ENCODE measurements at regions of chr22 and their contacts with region 1.

Region 1: DNA sequence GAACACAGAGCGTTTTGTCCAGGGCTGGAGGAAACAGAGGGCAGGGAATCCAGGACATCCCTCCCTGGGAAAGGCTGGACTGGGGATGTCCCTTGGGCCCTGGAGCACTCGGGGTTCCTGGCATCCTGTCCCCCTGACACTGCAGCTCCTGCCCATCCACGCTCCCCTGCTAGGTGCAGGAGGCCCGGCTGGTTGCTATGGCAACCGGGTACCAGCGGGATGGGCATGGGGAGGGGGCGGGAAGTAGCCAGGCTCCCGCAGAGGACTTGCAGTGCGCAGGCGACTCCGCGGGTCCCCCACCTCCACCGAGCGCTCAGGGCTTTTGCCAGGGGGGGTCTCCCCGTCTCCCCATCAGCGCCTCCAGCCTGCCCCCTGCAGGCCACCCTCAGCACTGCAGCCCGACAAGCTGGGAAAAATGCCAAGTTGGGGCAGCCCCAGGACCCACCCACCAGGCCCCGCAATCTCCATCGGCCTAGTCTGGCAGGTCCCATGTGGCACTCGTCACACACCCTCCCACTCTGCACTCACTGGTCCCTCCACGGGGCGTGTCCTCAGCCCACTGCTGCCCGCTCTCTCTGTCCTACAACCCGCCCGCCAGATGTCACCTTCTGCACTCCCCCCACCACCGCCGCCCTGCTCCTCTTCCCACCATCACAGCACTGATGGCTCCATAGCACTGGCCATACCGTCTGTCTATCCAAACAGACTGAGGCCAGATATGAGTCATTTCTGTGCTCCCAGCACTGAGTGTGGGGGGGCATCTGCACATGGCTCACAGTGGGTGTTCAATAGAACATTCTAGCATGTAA is 31.5 kb downstream of the KIAA0930 start:
- DNase-seq: peak; percentile 93
- H3K4me3 ChIP-seq: peak overlapping the region in 1 of 2 experiments; percentile 47; a peak in 1 of 4 replicates
- H3K27ac ChIP-seq: peak overlapping the region; percentile 43 to 68; a peak in 3 of 4 replicates
- H3K4me1 ChIP-seq: peaks cover 31 to 47% of the 10 kb centered on the region in 2 experiments
- H3K27me3 ChIP-seq: no peaks in the 10 kb centered on the region
- CTCF ChIP-seq: peak; percentile 84
- EP300 ChIP-seq: no peak
- RAD21 ChIP-seq: peak; percentile 25

Region 2: DNA sequence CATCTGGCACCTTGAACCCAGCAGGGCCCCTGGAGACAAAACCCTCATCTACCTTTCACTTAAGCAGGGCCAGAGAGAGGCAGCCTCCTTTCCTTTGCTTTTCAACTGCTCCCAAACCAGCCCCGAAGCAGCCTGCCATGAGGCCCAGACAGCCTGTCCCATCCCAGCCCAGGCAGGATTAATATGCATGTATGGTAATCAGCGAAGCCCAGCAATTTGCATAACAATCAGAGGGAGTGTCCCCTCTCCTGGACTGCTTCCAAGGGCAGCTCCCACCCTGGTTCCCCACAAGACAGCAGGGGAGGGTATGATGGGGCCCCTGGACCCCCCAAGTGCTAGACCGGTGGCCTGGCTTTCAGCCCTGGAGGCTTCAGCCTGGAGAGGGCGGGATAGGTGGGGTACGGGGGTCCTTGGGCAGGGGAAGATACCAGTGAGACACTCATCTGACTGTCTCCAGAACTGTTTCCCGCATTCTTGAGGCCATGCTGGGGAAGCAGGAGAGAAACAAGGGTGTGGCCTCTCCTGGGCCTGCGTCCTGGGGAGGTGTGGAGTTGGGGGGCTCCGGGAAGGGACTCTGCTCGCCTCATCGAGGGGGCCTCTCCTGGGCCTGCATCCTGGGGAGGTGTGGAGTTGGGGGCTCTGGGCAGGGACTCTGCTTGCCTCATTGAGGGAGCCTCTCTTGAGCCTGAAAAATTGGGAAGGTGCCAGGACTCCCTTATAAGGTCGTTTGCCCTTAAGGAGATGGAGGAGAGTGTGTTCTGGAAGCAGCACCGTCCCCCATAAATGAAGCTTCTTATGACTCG is 600.4 kb before region 1 on chr22:
- CTCF ChIA-PET with region 1: no interaction called
- POLR2A ChIA-PET with region 1: no interaction called
- DNase-seq: peak; percentile 15
- H3K4me3 ChIP-seq: no peak overlapping the region
- H3K27ac ChIP-seq: no peak overlapping the region
- H3K4me1 ChIP-seq: no peaks in the 10 kb centered on the region; a peak in 1 of 4 replicates
- H3K27me3 ChIP-seq: no peaks in the 10 kb centered on the region; the same call in 1 of the 2 replicates
- CTCF ChIP-seq: no peak
- EP300 ChIP-seq: no peak
- RAD21 ChIP-seq: no peak

Region 3: GRCh38 chr22:44981857-44982256 is 227.3 kb before region 1 on chr22:
- CTCF ChIA-PET with region 1: no interaction called
- POLR2A ChIA-PET with region 1: no interaction called
- DNase-seq: no peak
- H3K4me3 ChIP-seq: no peak overlapping the region
- H3K27ac ChIP-seq: no peak overlapping the region
- H3K4me1 ChIP-seq: peaks cover 0 to 14% of the 10 kb centered on the region in 2 experiments; a peak in 1 of 4 replicates
- H3K27me3 ChIP-seq: no peaks in the 10 kb centered on the region
- CTCF ChIP-seq: no peak
- EP300 ChIP-seq: no peak
- RAD21 ChIP-seq: no peak

Region 4: GRCh38 chr22:45101515-45102227 is 107.5 kb before region 1 on chr22:
- CTCF ChIA-PET with region 1: interaction called, 13 read pairs
- POLR2A ChIA-PET with region 1: no interaction called
- DNase-seq: peak; percentile 69
- H3K4me3 ChIP-seq: no peak overlapping the region; a peak in 1 of 4 replicates
- H3K27ac ChIP-seq: no peak overlapping the region
- H3K4me1 ChIP-seq: no peaks in the 10 kb centered on the region
- H3K27me3 ChIP-seq: no peaks in the 10 kb centered on the region
- CTCF ChIP-seq: peak; percentile 20; the same call in 1 of the 2 replicates
- EP300 ChIP-seq: no peak
- RAD21 ChIP-seq: peak; percentile 77

Region 5: GRCh38 chr22:45163451-45164269 is 45.5 kb before region 1 on chr22 and contains the start of gene NUP50:
- CTCF ChIA-PET with region 1: interaction called, 28 read pairs
- POLR2A ChIA-PET with region 1: no interaction called
- DNase-seq: peak; percentile 100
- H3K4me3 ChIP-seq: peak within 1 kb of the TSS; percentile 91 to 98
- H3K27ac ChIP-seq: peak within 1 kb of the TSS; percentile 76 to 82
- H3K4me1 ChIP-seq: peaks cover 23 to 28% of the 10 kb centered on the region in 2 experiments; a peak in 3 of 4 replicates
- H3K27me3 ChIP-seq: no peaks in the 10 kb centered on the region
- CTCF ChIP-seq: no peak
- EP300 ChIP-seq: no peak
- RAD21 ChIP-seq: no peak
- polyA plus RNA-seq, gene NUP50: 4.7 and 7.3 TPM in 2 replicates

Region 6: DNA sequence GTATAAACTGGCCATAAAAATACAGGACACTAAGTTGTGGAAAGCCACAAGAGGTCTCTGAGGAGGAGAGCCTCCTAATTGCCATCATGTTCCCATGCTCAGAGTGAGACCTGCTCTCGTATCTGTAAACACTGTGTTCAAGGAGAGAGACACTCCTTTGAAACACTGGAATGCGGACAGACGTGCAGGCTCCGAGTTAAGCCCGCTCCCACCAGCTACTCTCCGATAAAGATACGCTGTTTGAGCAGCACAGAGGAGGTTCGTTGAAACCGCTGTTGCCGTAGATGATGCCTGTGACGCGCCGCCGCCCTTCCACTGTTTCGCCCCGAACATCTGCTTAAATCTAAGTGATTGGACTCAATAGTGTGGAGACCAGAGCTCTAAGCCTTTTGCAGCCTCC is 20.4 kb before region 1 on chr22:
- CTCF ChIA-PET with region 1: interaction called, 15 read pairs
- POLR2A ChIA-PET with region 1: no interaction called
- DNase-seq: no peak
- H3K4me3 ChIP-seq: no peak overlapping the region
- H3K27ac ChIP-seq: no peak overlapping the region
- H3K4me1 ChIP-seq: no peaks in the 10 kb centered on the region; a peak in 1 of 4 replicates
- H3K27me3 ChIP-seq: no peaks in the 10 kb centered on the region
- CTCF ChIP-seq: no peak
- EP300 ChIP-seq: no peak
- RAD21 ChIP-seq: no peak

Region 7: GRCh38 chr22:45197606-45198462 is 11.4 kb before region 1 on chr22:
- CTCF ChIA-PET with region 1: interaction called, 13 read pairs
- POLR2A ChIA-PET with region 1: no interaction called
- DNase-seq: no peak
- H3K4me3 ChIP-seq: no peak overlapping the region
- H3K27ac ChIP-seq: no peak overlapping the region
- H3K4me1 ChIP-seq: no peaks in the 10 kb centered on the region; a peak in 1 of 4 replicates
- H3K27me3 ChIP-seq: no peaks in the 10 kb centered on the region
- CTCF ChIP-seq: no peak
- EP300 ChIP-seq: no peak
- RAD21 ChIP-seq: no peak

Region 8: DNA sequence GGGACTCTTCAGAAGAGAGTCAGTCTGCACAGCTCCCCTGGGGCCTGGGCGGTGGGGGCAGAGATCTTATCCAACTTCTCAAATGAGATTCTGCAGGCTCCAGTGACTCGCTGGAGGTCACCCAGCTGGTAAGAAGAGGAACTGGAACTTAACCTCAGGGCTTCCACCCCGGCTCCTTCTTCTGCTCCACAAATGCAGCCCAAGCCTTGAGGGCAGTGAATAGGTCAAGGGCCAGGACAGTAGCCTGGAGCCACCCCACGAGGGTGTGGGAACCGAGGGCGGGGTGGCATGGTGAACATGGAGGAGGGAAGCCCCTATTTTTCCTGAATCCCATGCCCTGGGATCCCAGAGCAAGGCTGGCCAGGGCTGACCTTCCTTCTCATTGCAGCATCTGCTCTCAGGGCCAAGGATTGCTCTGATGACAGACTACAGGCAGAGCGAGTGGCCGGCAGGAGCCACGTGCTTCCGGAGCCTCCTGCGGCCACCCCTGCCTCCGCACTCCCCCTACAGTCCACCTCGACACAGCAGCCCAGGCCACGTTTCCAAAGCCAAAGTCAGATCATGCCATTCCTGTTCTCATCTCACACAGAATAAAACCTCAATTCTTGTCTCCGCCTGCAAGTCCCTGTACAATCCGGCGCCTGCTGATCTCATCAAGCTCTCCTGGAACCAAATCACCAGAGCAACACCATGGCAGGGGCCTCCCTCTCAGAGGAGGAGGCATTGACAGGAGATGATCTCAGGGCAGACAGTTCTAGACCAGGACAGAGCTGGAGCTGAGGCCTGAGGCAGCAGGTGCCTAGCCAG is 54.5 kb after region 1 on chr22:
- CTCF ChIA-PET with region 1: interaction called, 18 read pairs
- POLR2A ChIA-PET with region 1: no interaction called
- DNase-seq: peak; percentile 94
- H3K4me3 ChIP-seq: no peak overlapping the region
- H3K27ac ChIP-seq: peak overlapping the region in 1 of 2 experiments; percentile 31; a peak in 3 of 4 replicates
- H3K4me1 ChIP-seq: peaks cover 0 to 12% of the 10 kb centered on the region in 2 experiments; a peak in 1 of 4 replicates
- H3K27me3 ChIP-seq: no peaks in the 10 kb centered on the region
- CTCF ChIP-seq: peak; percentile 72
- EP300 ChIP-seq: peak in 1 of 2 experiments; percentile 14; a peak in 1 of 4 replicates
- RAD21 ChIP-seq: peak; percentile 88

Region 9: GRCh38 chr22:45709060-45709739 is 500.0 kb after region 1 on chr22:
- CTCF ChIA-PET with region 1: no interaction called
- POLR2A ChIA-PET with region 1: no interaction called
- DNase-seq: peak; percentile 51
- H3K4me3 ChIP-seq: no peak overlapping the region
- H3K27ac ChIP-seq: peak overlapping the region; percentile 83 to 95
- H3K4me1 ChIP-seq: peaks cover 16 to 17% of the 10 kb centered on the region in 2 experiments; a peak in 3 of 4 replicates
- H3K27me3 ChIP-seq: no peaks in the 10 kb centered on the region
- CTCF ChIP-seq: no peak
- EP300 ChIP-seq: peak; percentile 58 to 87; a peak in 3 of 4 replicates
- RAD21 ChIP-seq: 0 out of 2 replicates have a peak, but pooled peaks have one; percentile 1

Measured in SK-N-SH (cell line).